ENCODE measurements at regions of chr15 and their contacts with region 1.

Region 1: DNA sequence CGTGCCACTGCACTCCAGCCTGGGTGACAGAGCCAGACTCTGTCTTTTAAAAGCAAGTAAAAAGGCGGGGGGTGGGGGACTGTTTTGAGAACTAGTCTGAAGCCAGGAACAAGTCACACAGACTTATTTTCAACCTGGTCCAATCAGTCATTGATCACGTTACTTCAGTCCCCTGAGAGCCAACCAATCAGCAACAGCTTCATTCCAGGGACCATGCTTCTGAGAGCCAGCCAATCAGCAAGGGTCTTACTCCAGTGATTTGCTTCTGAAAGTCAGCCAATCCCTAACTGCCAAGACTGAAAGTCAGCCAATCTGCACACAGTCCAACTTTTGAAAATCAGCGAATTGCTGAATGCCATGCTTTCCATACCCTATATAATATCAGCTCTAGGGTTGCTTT is 48.6 kb upstream of the C15orf39 start:
- DNase-seq: peak; percentile 82
- ATAC-seq: peak; percentile 67
- H3K4me3 ChIP-seq: no peak overlapping the region
- H3K27ac ChIP-seq: peak overlapping the region; percentile 5
- H3K4me1 ChIP-seq: peaks cover 67% of the 10 kb centered on the region
- H3K27me3 ChIP-seq: no peaks in the 10 kb centered on the region
- CTCF ChIP-seq: no peak
- EP300 ChIP-seq: no peak
- POLR2A ChIP-seq: no peak
- RAD21 ChIP-seq: no peak

Region 2: DNA sequence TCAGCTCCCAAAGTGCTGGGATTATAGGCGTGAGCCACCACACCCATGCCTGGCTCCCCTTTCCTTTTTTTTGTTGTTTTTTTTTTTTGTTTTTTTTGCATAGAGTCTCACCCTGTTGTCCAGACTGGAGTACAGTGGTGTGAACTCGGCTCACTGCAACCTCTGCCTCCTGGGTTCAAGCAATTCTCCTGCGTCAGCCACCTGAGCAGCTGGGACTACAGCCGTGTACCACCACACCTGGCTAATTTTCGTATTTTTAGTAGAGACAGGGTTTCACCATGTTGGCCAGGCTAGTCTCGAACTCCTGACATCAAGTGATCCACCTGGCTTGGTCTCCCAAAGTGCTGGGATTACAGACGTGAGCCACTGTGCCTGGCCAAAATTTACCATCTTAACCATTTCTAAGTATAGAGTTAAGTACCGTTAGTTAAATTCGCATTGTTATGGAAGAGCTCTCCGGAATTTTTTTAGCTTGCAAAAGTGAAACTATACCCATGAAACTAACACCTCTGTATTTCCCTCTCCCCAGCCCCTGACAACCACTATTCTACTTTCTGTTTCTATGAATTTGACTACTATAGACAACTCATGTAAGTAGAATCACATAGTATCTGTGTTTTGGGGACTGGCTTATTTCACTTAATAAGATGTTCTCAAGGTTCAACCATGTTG is 22.4 kb before region 1 on chr15:
- CTCF ChIA-PET with region 1: no interaction called
- POLR2A ChIA-PET with region 1: no interaction called
- in situ Hi-C with region 1: no loop called
- intact Hi-C with region 1: loop called (anchors 1 kb)
- DNase-seq: no peak
- ATAC-seq: no peak
- H3K4me3 ChIP-seq: no peak overlapping the region
- H3K27ac ChIP-seq: no peak overlapping the region
- H3K4me1 ChIP-seq: peaks cover 15% of the 10 kb centered on the region
- H3K27me3 ChIP-seq: no peaks in the 10 kb centered on the region
- CTCF ChIP-seq: no peak
- EP300 ChIP-seq: no peak
- POLR2A ChIP-seq: no peak
- RAD21 ChIP-seq: no peak

Region 3: DNA sequence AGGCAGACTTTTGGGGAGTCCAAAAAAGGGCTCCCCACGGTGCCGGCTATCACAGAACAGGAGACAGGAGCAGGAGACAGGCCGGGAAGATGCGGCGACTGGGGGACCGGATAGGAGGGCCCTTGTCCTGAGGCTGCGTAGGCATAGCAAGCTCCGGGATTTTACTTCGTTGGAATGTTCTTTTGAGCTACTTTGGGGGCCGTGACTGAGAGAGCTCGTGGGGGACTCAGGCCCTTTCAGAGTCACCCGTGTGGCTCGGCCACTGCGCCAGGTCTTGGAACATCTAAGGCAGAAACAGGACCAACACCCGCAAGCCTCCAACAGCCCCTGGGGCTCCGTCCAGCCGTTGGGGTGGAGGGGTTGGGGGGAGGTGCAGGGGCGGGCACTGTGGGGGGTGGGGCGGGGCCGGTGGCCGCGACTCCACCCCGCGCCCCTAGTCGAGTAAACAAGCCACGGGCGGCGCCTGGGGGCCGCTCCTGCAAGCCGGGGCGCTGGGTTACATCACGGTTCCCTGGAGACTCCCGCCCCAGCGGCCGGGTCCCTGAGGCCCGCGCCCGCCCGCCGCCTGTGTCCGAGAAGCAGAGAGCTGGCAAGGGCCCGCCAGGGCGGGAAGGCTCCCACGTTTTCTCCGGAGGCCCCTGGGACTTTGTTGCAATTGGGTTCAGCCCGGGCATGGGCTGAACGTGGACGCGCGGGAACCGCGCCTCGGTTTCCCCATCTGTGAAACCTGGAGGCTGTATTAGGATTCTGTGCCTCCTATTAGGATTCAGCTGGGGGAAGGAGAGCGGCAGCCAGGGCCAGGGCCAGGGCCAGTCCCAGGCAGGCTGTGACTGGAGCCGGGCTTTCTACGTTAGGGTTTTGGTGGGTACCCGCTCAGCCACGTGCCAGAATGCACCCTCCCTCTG is 25.3 kb after region 1 on chr15:
- CTCF ChIA-PET with region 1: no interaction called
- POLR2A ChIA-PET with region 1: interaction called, 3 read pairs
- in situ Hi-C with region 1: no loop called
- intact Hi-C with region 1: loop called (anchors 5 kb)
- DNase-seq: peak; percentile 75
- ATAC-seq: peak; percentile 72
- H3K4me3 ChIP-seq: peak overlapping the region; percentile 46 to 68 (median 55)
- H3K27ac ChIP-seq: peak overlapping the region; percentile 56
- H3K4me1 ChIP-seq: peaks cover 94% of the 10 kb centered on the region
- H3K27me3 ChIP-seq: no peaks in the 10 kb centered on the region
- CTCF ChIP-seq: peak; percentile 18
- EP300 ChIP-seq: peak in 1 of 2 experiments; percentile 61; a peak in 1 of 4 replicates
- POLR2A ChIP-seq: peak in 1 of 2 experiments; percentile 47; a peak in 2 of 4 replicates
- RAD21 ChIP-seq: peak; percentile 18; the same call in 1 of the 2 replicates